ENCODE measurements at regions of chr9 and their contacts with region 1.

Region 1: GRCh38 chr9:113410207-113410864 is at the starts of genes C9orf43 and POLE3:
- DNase-seq: peak; percentile 92

Region 2: GRCh38 chr9:113275157-113276131 is 134.9 kb before region 1 on chr9 and contains the starts of genes CDC26 and PRPF4:
- CTCF ChIA-PET with region 1: no interaction called
- POLR2A ChIA-PET with region 1: interaction called, 28 read pairs
- DNase-seq: peak; percentile 98

Region 3: GRCh38 chr9:113310538-113310937 is 99.8 kb before region 1 on chr9:
- CTCF ChIA-PET with region 1: interaction called, 3 read pairs
- POLR2A ChIA-PET with region 1: interaction called, 13 read pairs
- DNase-seq: no peak

Measured in HEK293T (cell line).